ENCODE measurements at regions of chr2 and their contacts with region 1.

Region 1: GRCh38 chr2:11465497-11466406 is at the start of gene E2F6:
- DNase-seq: peak; percentile 88
- ATAC-seq: peak; percentile 73
- H3K4me3 ChIP-seq: peak within 1 kb of the TSS; percentile 66 to 97 (median 92)
- H3K4me3 Mint-ChIP-seq: peak within 1 kb of the TSS; percentile 97
- H3K27ac ChIP-seq: peak within 1 kb of the TSS; percentile 1 to 79
- H3K27ac Mint-ChIP-seq: peak within 1 kb of the TSS; percentile 94
- H3K4me1 ChIP-seq: peaks cover 7 to 13% of the 10 kb centered on the region in 2 donors
- H3K4me1 Mint-ChIP-seq: peaks cover 23% of the 10 kb centered on the region
- H3K27me3 ChIP-seq: no peaks in the 10 kb centered on the region
- H3K27me3 Mint-ChIP-seq: no peaks in the 10 kb centered on the region
- CTCF ChIP-seq: no peak
- total RNA-seq, gene E2F6: 10.0 and 10.1 TPM in 2 replicates

Region 2: GRCh38 chr2:11154923-11155380 is 310.8 kb before region 1 on chr2:
- CTCF ChIA-PET with region 1: no interaction called
- POLR2A ChIA-PET with region 1: no interaction called
- intact Hi-C with region 1: loop called (anchors 1 kb)
- DNase-seq: peak; percentile 96
- ATAC-seq: peak; percentile 89
- H3K4me3 ChIP-seq: peak overlapping the region; percentile 30 to 87 (median 81)
- H3K4me3 Mint-ChIP-seq: peak overlapping the region; percentile 88
- H3K27ac ChIP-seq: peak overlapping the region; percentile 89 to 93
- H3K27ac Mint-ChIP-seq: peak overlapping the region; percentile 93
- H3K4me1 ChIP-seq: peaks cover 15 to 20% of the 10 kb centered on the region in 2 donors
- H3K4me1 Mint-ChIP-seq: peaks cover 18% of the 10 kb centered on the region
- H3K27me3 ChIP-seq: peaks cover 0 to 5% (median 0%) of the 10 kb centered on the region in 4 experiments
- H3K27me3 Mint-ChIP-seq: no peaks in the 10 kb centered on the region
- CTCF ChIP-seq: no peak

Region 3: DNA sequence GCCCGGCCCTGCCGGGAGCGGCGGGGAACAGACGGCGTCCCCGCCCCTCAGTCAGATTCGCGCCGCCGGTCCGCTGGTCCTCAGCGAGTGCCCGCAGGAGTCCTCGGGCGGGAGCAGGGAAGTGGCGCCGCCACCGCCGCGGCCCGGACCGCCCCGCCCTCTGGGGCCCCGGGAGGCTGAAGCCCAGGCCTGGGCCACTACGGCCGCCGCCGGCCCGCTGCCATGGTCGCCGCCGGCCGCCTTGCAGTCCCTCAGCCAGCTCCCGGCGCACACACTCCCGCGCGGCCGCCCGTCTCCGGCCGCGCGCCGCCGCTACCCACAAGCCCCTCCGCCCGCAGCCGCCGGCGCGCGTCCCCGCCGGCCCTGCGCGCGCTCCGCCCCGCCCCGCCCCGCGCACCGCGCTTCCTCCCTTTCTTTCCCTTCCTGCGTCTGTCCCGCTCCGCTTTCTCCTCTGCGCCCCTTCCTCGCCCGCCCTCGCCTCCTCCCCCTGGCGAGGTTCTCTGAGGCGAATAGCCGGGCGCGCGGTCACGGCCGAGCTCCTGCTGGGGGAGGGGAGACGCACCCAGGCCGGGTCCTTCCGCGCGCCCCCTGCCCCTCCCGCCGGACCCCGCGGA is 121.3 kb before region 1 on chr2 and contains the start of gene ROCK2:
- CTCF ChIA-PET with region 1: no interaction called
- POLR2A ChIA-PET with region 1: interaction called, 3 read pairs
- intact Hi-C with region 1: loop called (anchors 2 kb)
- DNase-seq: peak; percentile 83
- ATAC-seq: peak; percentile 69
- H3K4me3 ChIP-seq: peak within 1 kb of the TSS; percentile 56 to 91 (median 81)
- H3K4me3 Mint-ChIP-seq: peak within 1 kb of the TSS; percentile 99
- H3K27ac ChIP-seq: peak within 1 kb of the TSS; percentile 42 to 67
- H3K27ac Mint-ChIP-seq: peak within 1 kb of the TSS; percentile 97
- H3K4me1 ChIP-seq: peaks cover 16 to 19% of the 10 kb centered on the region in 2 donors
- H3K4me1 Mint-ChIP-seq: peaks cover 38% of the 10 kb centered on the region
- H3K27me3 ChIP-seq: no peaks in the 10 kb centered on the region
- H3K27me3 Mint-ChIP-seq: no peaks in the 10 kb centered on the region
- CTCF ChIP-seq: no peak
- total RNA-seq, gene ROCK2: 30.2 and 32.8 TPM in 2 replicates